ENCODE measurements at regions of chr4 and their contacts with region 1.

Region 1: GRCh38 chr4:101020956-101021355 is 326.4 kb downstream of the PPP3CA start:
- DNase-seq: peak; percentile 84
- H3K4me3 Mint-ChIP-seq: peak overlapping the region; percentile 17
- H3K27ac Mint-ChIP-seq: peak overlapping the region; percentile 96
- H3K4me1 Mint-ChIP-seq: peaks cover 33% of the 10 kb centered on the region
- H3K27me3 Mint-ChIP-seq: no peaks in the 10 kb centered on the region
- CTCF ChIP-seq: no peak

Region 2: GRCh38 chr4:100977746-100978397 is 43.1 kb before region 1 on chr4:
- CTCF ChIA-PET with region 1: no interaction called
- POLR2A ChIA-PET with region 1: interaction called, 12 read pairs
- intact Hi-C with region 1: no loop called
- DNase-seq: peak; percentile 77
- H3K4me3 Mint-ChIP-seq: no peak overlapping the region
- H3K27ac Mint-ChIP-seq: no peak overlapping the region
- H3K4me1 Mint-ChIP-seq: peaks cover 23% of the 10 kb centered on the region
- H3K27me3 Mint-ChIP-seq: no peaks in the 10 kb centered on the region
- CTCF ChIP-seq: no peak

Region 3: GRCh38 chr4:101155368-101155767 is 134.4 kb after region 1 on chr4:
- CTCF ChIA-PET with region 1: no interaction called
- POLR2A ChIA-PET with region 1: interaction called, 3 read pairs
- intact Hi-C with region 1: loop called (anchors 5 kb)
- DNase-seq: peak; percentile 92
- H3K4me3 Mint-ChIP-seq: no peak overlapping the region
- H3K27ac Mint-ChIP-seq: peak overlapping the region; percentile 96
- H3K4me1 Mint-ChIP-seq: peaks cover 35% of the 10 kb centered on the region
- H3K27me3 Mint-ChIP-seq: no peaks in the 10 kb centered on the region
- CTCF ChIP-seq: no peak

Measured in MCF 10A (cell line).